ENCODE measurements at regions of chr3 and their contacts with region 1.

Region 1: DNA sequence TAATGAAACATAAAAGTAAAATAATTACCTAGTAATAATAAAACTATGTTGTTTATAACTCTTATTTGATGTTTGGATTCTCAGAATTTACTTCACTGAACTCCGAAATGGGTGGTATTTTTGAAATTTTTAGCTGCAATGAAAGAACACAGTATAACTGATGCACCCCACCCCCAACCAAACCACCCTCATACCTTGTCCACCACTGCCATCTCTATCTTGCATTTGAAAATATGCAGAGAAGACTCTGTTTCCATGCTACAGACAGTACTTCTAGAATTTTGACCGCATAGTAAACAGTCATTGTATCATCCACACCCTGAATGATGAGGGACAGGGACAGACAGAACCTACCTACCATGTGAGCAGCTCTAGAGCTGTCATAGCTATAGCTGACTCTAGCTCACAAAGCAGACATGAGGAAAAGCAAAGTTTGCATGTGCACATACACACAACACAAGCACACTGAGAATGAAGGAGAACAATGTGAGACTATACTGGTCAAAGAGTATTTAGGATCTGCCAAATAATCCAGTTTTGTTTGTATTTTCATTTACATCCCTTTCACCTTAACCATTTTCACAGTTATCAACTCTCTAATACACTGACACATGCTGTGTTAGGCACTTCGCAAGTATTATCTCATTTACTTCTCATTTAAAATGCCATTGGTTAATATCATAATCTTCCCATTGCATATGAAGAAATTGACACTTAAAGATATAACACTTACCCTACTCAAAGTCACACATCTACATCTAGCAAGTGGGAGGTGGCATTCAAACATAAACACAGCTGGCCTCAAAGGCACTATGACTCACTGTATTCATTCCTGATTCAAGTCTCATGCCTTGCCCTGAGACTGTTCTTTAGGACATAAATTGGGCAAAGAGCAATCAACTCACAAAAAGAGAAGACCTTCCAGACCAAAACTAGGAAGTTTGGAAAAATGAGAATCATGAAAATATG is 1014.7 kb upstream of the CFAP20DC start:
- DNase-seq: no peak
- H3K4me3 ChIP-seq: no peak overlapping the region
- H3K4me3 Mint-ChIP-seq: peak overlapping the region in 3 of 8 donors; percentile 64 to 72 (median 70)
- H3K27ac ChIP-seq: no peak overlapping the region
- H3K27ac Mint-ChIP-seq: peak overlapping the region in 6 of 7 donors; percentile 11 to 91 (median 72)
- H3K4me1 ChIP-seq: peaks cover 55% of the 10 kb centered on the region
- H3K4me1 Mint-ChIP-seq: peaks cover 33 to 60% (median 50%) of the 10 kb centered on the region in 4 donors
- H3K27me3 ChIP-seq: no peaks in the 10 kb centered on the region
- H3K27me3 Mint-ChIP-seq: no peaks in the 10 kb centered on the region

Region 2: GRCh38 chr3:60048447-60048848 is 16.0 kb before region 1 on chr3:
- CTCF ChIA-PET with region 1: no interaction called
- POLR2A ChIA-PET with region 1: interaction called, 5 read pairs
- intact Hi-C with region 1: loop called (anchors 2 kb)
- DNase-seq: peak; percentile 54 to 73 (median 69)
- H3K4me3 ChIP-seq: peak overlapping the region in 1 of 2 donors; percentile 4
- H3K4me3 Mint-ChIP-seq: peak overlapping the region; percentile 67 to 87 (median 77)
- H3K27ac ChIP-seq: peak overlapping the region; percentile 36
- H3K27ac Mint-ChIP-seq: peak overlapping the region; percentile 93 to 97 (median 94)
- H3K4me1 ChIP-seq: peaks cover 67% of the 10 kb centered on the region
- H3K4me1 Mint-ChIP-seq: peaks cover 33 to 68% (median 48%) of the 10 kb centered on the region in 4 donors
- H3K27me3 ChIP-seq: no peaks in the 10 kb centered on the region
- H3K27me3 Mint-ChIP-seq: no peaks in the 10 kb centered on the region

Region 3: DNA sequence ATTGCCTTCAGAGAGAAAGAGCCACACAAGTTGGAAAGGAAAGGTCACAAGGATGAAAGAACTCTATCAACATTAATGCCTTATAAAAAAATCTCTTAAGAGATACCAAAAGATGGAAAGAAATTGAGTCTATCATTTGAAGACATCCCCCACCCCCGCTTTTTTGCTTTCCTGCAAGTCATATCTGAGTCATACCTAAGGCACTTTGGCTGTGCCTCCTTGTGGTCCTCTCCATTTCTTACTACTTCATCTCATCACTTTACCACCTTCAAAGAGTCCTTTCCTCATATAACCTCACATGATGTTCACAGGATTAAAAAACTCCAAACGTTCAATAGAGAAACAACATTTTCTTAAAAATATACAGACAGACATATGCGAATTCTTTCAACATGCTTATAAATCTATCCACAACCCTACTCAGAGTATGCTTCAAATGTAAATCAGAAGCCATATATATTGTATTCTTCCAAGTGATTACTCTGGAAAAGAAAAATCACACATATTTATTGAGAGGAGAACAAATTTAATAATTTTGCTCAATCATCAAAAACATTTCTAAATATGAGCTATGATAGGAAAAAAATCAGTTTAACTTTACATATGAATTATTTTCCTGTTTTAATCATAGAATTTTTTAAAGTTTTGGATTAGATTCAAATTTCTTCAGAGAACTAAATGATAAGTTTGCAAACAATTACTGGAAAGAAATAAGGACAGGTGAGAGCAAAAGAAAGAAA is 10.8 kb before region 1 on chr3:
- CTCF ChIA-PET with region 1: interaction called, 3 read pairs
- POLR2A ChIA-PET with region 1: interaction called, 13 read pairs
- intact Hi-C with region 1: loop called (anchors 2 kb)
- DNase-seq: peak in 1 of 5 donors; percentile 64
- H3K4me3 ChIP-seq: no peak overlapping the region
- H3K4me3 Mint-ChIP-seq: peak overlapping the region in 5 of 8 donors; percentile 10 to 60 (median 55)
- H3K27ac ChIP-seq: no peak overlapping the region
- H3K27ac Mint-ChIP-seq: peak overlapping the region in 6 of 7 donors; percentile 10 to 81 (median 18)
- H3K4me1 ChIP-seq: peaks cover 64% of the 10 kb centered on the region
- H3K4me1 Mint-ChIP-seq: peaks cover 35 to 63% (median 50%) of the 10 kb centered on the region in 4 donors
- H3K27me3 ChIP-seq: no peaks in the 10 kb centered on the region
- H3K27me3 Mint-ChIP-seq: no peaks in the 10 kb centered on the region

Region 4: DNA sequence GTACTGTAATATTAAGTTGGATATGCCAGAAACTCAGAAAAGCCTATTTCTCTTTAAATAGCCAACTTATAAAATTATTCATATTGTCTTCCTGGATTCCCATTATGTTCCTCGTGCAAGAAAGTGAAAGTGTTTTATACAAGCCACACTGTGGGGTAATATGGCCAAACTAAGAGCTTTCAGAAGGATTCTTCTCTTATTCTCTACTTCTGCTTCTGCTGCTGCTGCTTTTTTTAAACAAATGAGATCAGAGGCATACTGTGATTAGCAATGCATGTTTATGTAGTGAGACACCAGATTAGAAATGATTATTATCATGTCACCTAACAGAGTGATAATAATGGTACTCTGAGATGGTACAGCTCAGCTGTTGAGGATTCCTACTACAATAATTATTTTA is 11.8 kb after region 1 on chr3:
- CTCF ChIA-PET with region 1: interaction called, 5 read pairs
- POLR2A ChIA-PET with region 1: interaction called, 14 read pairs
- intact Hi-C with region 1: loop called (anchors 1 kb)
- DNase-seq: no peak
- H3K4me3 ChIP-seq: no peak overlapping the region
- H3K4me3 Mint-ChIP-seq: peak overlapping the region; percentile 49 to 77 (median 68)
- H3K27ac ChIP-seq: no peak overlapping the region
- H3K27ac Mint-ChIP-seq: peak overlapping the region in 6 of 7 donors; percentile 2 to 83 (median 60)
- H3K4me1 ChIP-seq: peaks cover 35% of the 10 kb centered on the region
- H3K4me1 Mint-ChIP-seq: peaks cover 27 to 67% (median 44%) of the 10 kb centered on the region in 4 donors
- H3K27me3 ChIP-seq: no peaks in the 10 kb centered on the region
- H3K27me3 Mint-ChIP-seq: no peaks in the 10 kb centered on the region

Region 5: GRCh38 chr3:60081381-60082095 is 17.0 kb after region 1 on chr3:
- CTCF ChIA-PET with region 1: interaction called, 5 read pairs
- POLR2A ChIA-PET with region 1: interaction called, 14 read pairs
- intact Hi-C with region 1: loop called (anchors 2 kb)
- DNase-seq: peak in 4 of 5 donors; percentile 30 to 40 (median 36)
- H3K4me3 ChIP-seq: peak overlapping the region in 1 of 2 donors; percentile 27
- H3K4me3 Mint-ChIP-seq: peak overlapping the region; percentile 74 to 96 (median 84)
- H3K27ac ChIP-seq: no peak overlapping the region
- H3K27ac Mint-ChIP-seq: peak overlapping the region; percentile 70 to 94 (median 86)
- H3K4me1 ChIP-seq: peaks cover 43% of the 10 kb centered on the region
- H3K4me1 Mint-ChIP-seq: peaks cover 29 to 50% (median 41%) of the 10 kb centered on the region in 4 donors
- H3K27me3 ChIP-seq: no peaks in the 10 kb centered on the region
- H3K27me3 Mint-ChIP-seq: no peaks in the 10 kb centered on the region

Region 6: GRCh38 chr3:60101621-60102020 is 37.1 kb after region 1 on chr3:
- CTCF ChIA-PET with region 1: no interaction called
- POLR2A ChIA-PET with region 1: no interaction called
- intact Hi-C with region 1: no loop called
- DNase-seq: no peak
- H3K4me3 ChIP-seq: no peak overlapping the region
- H3K4me3 Mint-ChIP-seq: no peak overlapping the region
- H3K27ac ChIP-seq: no peak overlapping the region
- H3K27ac Mint-ChIP-seq: no peak overlapping the region
- H3K4me1 ChIP-seq: peaks cover 15% of the 10 kb centered on the region
- H3K4me1 Mint-ChIP-seq: peaks cover 9 to 17% (median 11%) of the 10 kb centered on the region in 4 donors
- H3K27me3 ChIP-seq: no peaks in the 10 kb centered on the region
- H3K27me3 Mint-ChIP-seq: no peaks in the 10 kb centered on the region